Right cardiac atrium (tissue), 5 donors: ENCODE measurements at regions of chr1 and their contacts with region 1.

Region 1: DNA sequence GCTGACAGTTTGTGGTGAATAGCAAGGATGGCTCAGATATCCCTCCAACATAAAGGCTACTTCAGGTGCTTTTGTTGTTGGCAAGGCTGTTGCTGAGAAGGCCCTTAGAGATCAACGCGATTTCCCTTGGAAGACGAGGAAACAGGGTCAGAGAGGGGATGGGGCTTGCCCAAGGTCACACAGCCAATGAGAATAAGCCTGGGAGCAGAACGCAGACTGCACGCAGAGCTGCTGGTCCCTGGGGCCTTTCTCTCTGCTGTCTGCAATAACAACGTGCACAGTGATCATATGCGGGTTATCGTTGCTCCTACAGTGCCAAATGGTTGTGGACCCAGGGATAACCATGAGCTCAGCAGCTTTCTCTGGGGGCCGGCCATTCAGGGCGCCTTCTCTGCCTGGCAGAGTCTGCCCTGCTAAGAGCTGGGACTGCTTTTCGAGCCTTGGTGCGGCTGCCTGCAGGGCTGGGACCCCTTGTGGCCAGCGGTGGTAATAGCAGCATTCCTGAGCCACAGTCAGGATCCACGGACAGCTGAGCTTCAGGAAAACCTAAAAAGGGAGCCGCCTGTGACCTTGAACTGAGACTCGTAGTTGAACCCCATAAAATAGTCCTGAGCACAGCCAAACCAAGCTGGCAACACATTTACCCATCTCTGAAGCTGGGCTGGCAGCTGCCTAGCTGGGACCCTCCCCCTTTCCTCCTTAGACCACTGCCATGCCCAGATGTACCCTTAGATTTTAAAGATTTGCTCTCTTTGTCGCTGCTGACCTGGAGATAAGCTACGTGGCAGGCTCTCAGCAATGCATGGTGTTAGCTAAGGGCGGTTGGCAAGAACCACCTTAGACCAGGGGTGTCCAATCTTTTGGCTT is 39.8 kb downstream of the HTR6 start:
- DNase-seq: peak; percentile 71 to 89 (median 86)
- ATAC-seq: peak; percentile 86 to 87
- H3K4me3 ChIP-seq: no peak overlapping the region
- H3K27ac ChIP-seq: no peak overlapping the region
- H3K4me1 ChIP-seq: no peaks in the 10 kb centered on the region
- H3K27me3 ChIP-seq: no peaks in the 10 kb centered on the region

Region 2: DNA sequence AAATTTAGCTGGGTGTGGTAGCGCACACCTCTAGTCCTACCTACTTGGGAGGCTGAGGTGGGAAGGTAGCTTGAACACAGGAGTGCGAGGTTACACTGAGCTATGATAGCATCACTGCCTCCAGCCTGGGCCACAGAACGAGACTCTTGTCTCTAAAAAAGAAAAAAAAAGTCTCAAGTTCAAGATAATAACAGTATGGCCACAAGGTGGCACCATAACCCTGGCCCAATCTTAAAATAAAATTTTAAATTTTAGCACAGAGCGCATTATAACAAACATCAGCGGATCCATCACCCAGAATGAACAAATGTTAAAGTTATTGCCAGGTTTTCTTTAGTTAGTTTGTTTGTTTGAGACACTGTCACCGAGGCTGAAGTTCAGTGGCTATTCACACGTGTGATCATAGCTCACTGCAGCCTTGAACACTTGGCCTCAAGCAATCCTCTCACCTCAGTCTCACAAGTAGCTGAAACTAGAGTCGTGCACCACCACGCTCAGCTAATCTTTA is 42.7 kb before region 1 on chr1:
- intact Hi-C with region 1: loop called (anchors 2 to 5 kb)
- DNase-seq: peak in 1 of 3 donors; percentile 53
- ATAC-seq: no peak
- H3K4me3 ChIP-seq: no peak overlapping the region
- H3K27ac ChIP-seq: no peak overlapping the region
- H3K4me1 ChIP-seq: peaks cover 2% of the 10 kb centered on the region
- H3K27me3 ChIP-seq: no peaks in the 10 kb centered on the region